ENCODE measurements at regions of chr13 and their contacts with region 1.

Region 1: GRCh38 chr13:73096181-73097117 is 37.6 kb downstream of the KLF5 start:
- DNase-seq: peak; percentile 91 to 92
- H3K4me3 ChIP-seq: no peak overlapping the region
- H3K27ac ChIP-seq: peak overlapping the region; percentile 85
- H3K4me1 ChIP-seq: peaks cover 30% of the 10 kb centered on the region
- H3K27me3 ChIP-seq: no peaks in the 10 kb centered on the region
- CTCF ChIP-seq: no peak

Region 2: DNA sequence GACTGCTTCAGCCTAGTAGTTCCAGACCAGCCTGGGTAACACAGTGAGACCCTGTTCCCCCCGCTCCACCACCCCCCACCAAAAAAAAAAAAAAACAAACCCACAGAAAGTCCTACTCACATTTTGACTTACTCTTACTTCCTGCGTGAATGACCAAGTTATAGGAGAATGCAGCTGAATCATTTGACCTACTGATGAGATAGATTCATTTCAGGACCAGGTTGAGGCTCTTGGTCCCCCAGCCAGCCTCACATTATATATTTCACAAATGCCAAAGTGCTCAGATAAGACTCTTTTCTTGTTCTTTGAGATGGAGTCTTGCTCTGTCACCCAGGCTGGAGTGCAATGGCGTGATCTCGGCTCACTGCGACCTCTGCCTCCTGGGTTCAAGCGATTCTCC is 32.6 kb after region 1 on chr13:
- CTCF ChIA-PET with region 1: no interaction called
- POLR2A ChIA-PET with region 1: no interaction called
- intact Hi-C with region 1: no loop called
- DNase-seq: no peak
- H3K4me3 ChIP-seq: no peak overlapping the region
- H3K27ac ChIP-seq: no peak overlapping the region
- H3K4me1 ChIP-seq: peaks cover 9% of the 10 kb centered on the region
- H3K27me3 ChIP-seq: no peaks in the 10 kb centered on the region
- CTCF ChIP-seq: no peak

Region 3: GRCh38 chr13:73168226-73168952 is 71.9 kb after region 1 on chr13:
- CTCF ChIA-PET with region 1: no interaction called
- POLR2A ChIA-PET with region 1: no interaction called
- intact Hi-C with region 1: loop called (anchors 2 kb)
- DNase-seq: no peak
- H3K4me3 ChIP-seq: no peak overlapping the region
- H3K27ac ChIP-seq: 0 out of 2 replicates have a peak overlapping the region, but pooled peaks have one; percentile 70
- H3K4me1 ChIP-seq: peaks cover 65% of the 10 kb centered on the region
- H3K27me3 ChIP-seq: no peaks in the 10 kb centered on the region
- CTCF ChIP-seq: no peak

Region 4: DNA sequence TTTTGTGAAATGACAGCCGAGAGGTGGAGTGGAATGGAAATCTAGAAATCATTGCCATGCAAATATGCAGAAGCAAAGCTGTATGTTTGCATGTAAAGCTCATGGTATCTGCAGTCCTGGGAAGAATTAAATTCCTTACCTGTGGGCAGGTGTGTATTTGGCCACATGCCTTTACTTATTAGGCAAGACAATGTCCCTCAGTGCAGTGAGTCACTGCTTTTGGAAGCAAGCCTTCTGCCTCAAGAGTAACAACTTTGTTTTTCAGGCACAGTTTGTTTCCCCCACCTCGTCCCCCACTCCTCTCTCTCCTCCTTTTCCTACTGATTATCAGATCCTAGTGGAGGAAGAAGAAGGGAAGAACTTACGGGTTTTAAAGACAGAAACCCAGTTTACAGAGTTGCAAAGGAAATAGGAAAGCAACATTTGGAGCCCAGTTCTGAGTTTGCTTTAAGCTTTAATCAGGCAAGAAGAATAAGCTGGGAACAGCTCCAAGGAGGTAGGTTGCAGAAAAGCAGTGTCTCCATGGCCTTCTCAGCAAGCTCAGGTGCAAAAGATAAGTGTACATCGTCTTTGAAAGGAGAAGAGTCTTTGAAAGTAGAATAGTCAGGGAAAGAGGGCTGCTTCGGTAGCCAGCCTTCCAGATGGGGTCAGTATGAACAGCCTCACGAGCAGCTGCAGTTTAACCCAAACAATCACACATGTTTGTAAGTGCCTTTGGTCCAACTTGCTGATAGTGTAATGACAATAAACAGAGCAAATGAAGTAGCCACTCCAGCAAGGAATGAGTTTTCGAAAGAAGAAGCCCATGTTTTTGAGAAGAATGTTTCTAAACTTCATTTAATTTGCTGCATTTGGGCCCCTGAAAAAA is 152.5 kb after region 1 on chr13:
- CTCF ChIA-PET with region 1: no interaction called
- POLR2A ChIA-PET with region 1: no interaction called
- intact Hi-C with region 1: loop called (anchors 1 kb)
- DNase-seq: peak; percentile 60 to 89
- H3K4me3 ChIP-seq: peak overlapping the region; percentile 3; the same call in 1 of the 2 replicates
- H3K27ac ChIP-seq: peak overlapping the region; percentile 71
- H3K4me1 ChIP-seq: peaks cover 22% of the 10 kb centered on the region
- H3K27me3 ChIP-seq: no peaks in the 10 kb centered on the region
- CTCF ChIP-seq: no peak

Region 5: GRCh38 chr13:73556902-73557301 is 460.5 kb after region 1 on chr13:
- CTCF ChIA-PET with region 1: no interaction called
- POLR2A ChIA-PET with region 1: no interaction called
- intact Hi-C with region 1: no loop called
- DNase-seq: no peak
- H3K4me3 ChIP-seq: no peak overlapping the region
- H3K27ac ChIP-seq: no peak overlapping the region
- H3K4me1 ChIP-seq: no peaks in the 10 kb centered on the region
- H3K27me3 ChIP-seq: no peaks in the 10 kb centered on the region
- CTCF ChIP-seq: no peak

Region 6: GRCh38 chr13:74794582-74794981 is 1698.1 kb after region 1 on chr13:
- CTCF ChIA-PET with region 1: no interaction called
- POLR2A ChIA-PET with region 1: no interaction called
- intact Hi-C with region 1: no loop called
- DNase-seq: no peak
- H3K4me3 ChIP-seq: no peak overlapping the region
- H3K27ac ChIP-seq: no peak overlapping the region
- H3K4me1 ChIP-seq: no peaks in the 10 kb centered on the region
- H3K27me3 ChIP-seq: no peaks in the 10 kb centered on the region
- CTCF ChIP-seq: no peak